ENCODE measurements at regions of chr19 and their contacts with region 1.

Region 1: GRCh38 chr19:12551060-12551832 is at the start of gene ZNF564:
- DNase-seq: peak; percentile 74 to 97 (median 95)
- ATAC-seq: peak; percentile 99
- H3K4me3 ChIP-seq: peak within 1 kb of the TSS; percentile 88
- H3K4me3 Mint-ChIP-seq: peak within 1 kb of the TSS; percentile 89 to 100 (median 98)
- H3K27ac ChIP-seq: peak within 1 kb of the TSS; percentile 90
- H3K27ac Mint-ChIP-seq: peak within 1 kb of the TSS; percentile 92 to 98 (median 95)
- H3K4me1 ChIP-seq: peaks cover 8 to 28% of the 10 kb centered on the region in 2 donors
- H3K4me1 Mint-ChIP-seq: peaks cover 29 to 55% (median 47%) of the 10 kb centered on the region in 7 donors
- H3K27me3 ChIP-seq: no peaks in the 10 kb centered on the region
- H3K27me3 Mint-ChIP-seq: peaks cover 0 to 4% (median 0%) of the 10 kb centered on the region in 5 donors
- total RNA-seq, gene ZNF564: 10.5 to 33.6 (median 19.0) TPM

Region 2: GRCh38 chr19:12162882-12163806 is 388.1 kb before region 1 on chr19 and contains the start of gene ZNF136:
- CTCF ChIA-PET with region 1: no interaction called
- POLR2A ChIA-PET with region 1: interaction called, 3 read pairs
- intact Hi-C with region 1: loop called (anchors 1 kb)
- DNase-seq: peak; percentile 77 to 95 (median 91)
- ATAC-seq: peak; percentile 99
- H3K4me3 ChIP-seq: peak within 1 kb of the TSS; percentile 78
- H3K4me3 Mint-ChIP-seq: peak within 1 kb of the TSS; percentile 88 to 100 (median 98)
- H3K27ac ChIP-seq: peak within 1 kb of the TSS; percentile 96
- H3K27ac Mint-ChIP-seq: peak within 1 kb of the TSS; percentile 88 to 100 (median 98)
- H3K4me1 ChIP-seq: peaks cover 7 to 15% of the 10 kb centered on the region in 2 donors
- H3K4me1 Mint-ChIP-seq: peaks cover 28 to 64% (median 46%) of the 10 kb centered on the region in 7 donors
- H3K27me3 ChIP-seq: no peaks in the 10 kb centered on the region
- H3K27me3 Mint-ChIP-seq: no peaks in the 10 kb centered on the region
- total RNA-seq, gene ZNF136: 16.8 to 36.8 (median 31.1) TPM

Region 3: DNA sequence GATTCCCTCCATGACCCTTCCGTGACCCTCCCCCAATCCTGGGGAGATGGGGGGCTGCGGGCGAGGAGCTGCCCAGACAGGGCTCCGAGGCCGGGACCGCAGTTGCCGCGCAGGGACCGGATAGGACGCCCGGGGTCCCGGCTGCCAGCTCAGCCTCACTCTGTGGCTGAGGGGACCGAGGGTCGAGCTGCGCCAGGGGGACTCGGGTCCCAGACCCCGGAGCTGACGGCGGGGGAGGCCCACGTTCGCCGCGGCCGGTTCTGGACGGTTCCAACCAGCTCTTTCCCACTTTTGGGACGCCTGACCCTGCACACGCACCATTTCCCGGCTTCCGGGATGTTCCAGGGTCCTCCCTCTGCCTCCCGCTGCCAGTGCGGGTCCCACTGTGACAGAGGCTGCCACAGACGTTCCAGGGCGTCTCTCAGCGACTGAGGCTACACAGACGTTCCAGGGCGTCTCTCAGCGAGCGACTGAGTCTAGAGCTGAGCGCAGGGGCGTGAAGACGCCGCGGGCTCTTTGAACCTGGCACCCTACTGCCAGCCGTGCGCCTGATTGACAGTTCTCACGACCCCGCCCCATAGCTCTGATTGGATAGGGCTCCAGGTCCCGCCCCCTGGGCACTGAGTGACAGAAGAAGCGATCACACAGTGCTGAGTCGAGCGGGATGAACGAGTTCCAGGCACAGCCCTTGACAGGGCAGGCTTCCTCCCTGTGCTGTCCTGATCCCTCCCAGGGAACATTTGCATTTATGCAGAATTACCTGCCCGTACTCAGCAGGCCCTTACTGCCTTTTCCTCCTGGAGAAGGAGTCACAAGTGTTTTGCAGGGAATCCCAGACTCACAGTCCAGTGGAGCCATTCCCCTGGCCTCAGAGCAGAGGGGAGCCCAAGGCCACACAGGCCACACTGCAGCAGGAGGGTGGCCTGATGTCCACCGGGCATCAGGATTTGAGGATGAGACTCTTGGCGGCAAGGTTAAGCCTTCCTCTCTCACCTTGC is 217.8 kb before region 1 on chr19 and contains the start of gene ZNF563:
- CTCF ChIA-PET with region 1: no interaction called
- POLR2A ChIA-PET with region 1: interaction called, 9 read pairs
- intact Hi-C with region 1: loop called in 1 of 2 experiments (anchors 1 kb)
- DNase-seq: peak; percentile 91 to 99 (median 98)
- ATAC-seq: peak; percentile 99
- H3K4me3 ChIP-seq: peak within 1 kb of the TSS; percentile 61
- H3K4me3 Mint-ChIP-seq: peak within 1 kb of the TSS; percentile 90 to 100 (median 96)
- H3K27ac ChIP-seq: peak within 1 kb of the TSS; percentile 92
- H3K27ac Mint-ChIP-seq: peak within 1 kb of the TSS; percentile 92 to 99 (median 97)
- H3K4me1 ChIP-seq: peaks cover 9 to 22% of the 10 kb centered on the region in 2 donors
- H3K4me1 Mint-ChIP-seq: peaks cover 23 to 49% (median 40%) of the 10 kb centered on the region in 7 donors
- H3K27me3 ChIP-seq: no peaks in the 10 kb centered on the region
- H3K27me3 Mint-ChIP-seq: no peaks in the 10 kb centered on the region
- total RNA-seq, gene ZNF563: 2.8 to 23.2 (median 6.1) TPM

Region 4: GRCh38 chr19:12346896-12347295 is 204.3 kb before region 1 on chr19:
- CTCF ChIA-PET with region 1: no interaction called
- POLR2A ChIA-PET with region 1: no interaction called
- intact Hi-C with region 1: no loop called
- DNase-seq: peak in 5 of 9 donors; percentile 19 to 52 (median 32)
- ATAC-seq: peak; percentile 68
- H3K4me3 ChIP-seq: no peak overlapping the region
- H3K4me3 Mint-ChIP-seq: no peak overlapping the region
- H3K27ac ChIP-seq: no peak overlapping the region
- H3K27ac Mint-ChIP-seq: peak overlapping the region in 1 of 9 donors; percentile 36
- H3K4me1 ChIP-seq: no peaks in the 10 kb centered on the region
- H3K4me1 Mint-ChIP-seq: peaks cover 0 to 2% (median 0%) of the 10 kb centered on the region in 7 donors
- H3K27me3 ChIP-seq: no peaks in the 10 kb centered on the region
- H3K27me3 Mint-ChIP-seq: no peaks in the 10 kb centered on the region

Region 5: GRCh38 chr19:12440541-12441316 is 110.5 kb before region 1 on chr19 and contains the start of gene ZNF443:
- CTCF ChIA-PET with region 1: no interaction called
- POLR2A ChIA-PET with region 1: interaction called, 4 read pairs
- intact Hi-C with region 1: loop called (anchors 1 to 2 kb)
- DNase-seq: peak; percentile 93 to 99 (median 98)
- ATAC-seq: peak; percentile 99
- H3K4me3 ChIP-seq: peak within 1 kb of the TSS; percentile 80
- H3K4me3 Mint-ChIP-seq: peak within 1 kb of the TSS; percentile 97 to 100 (median 100)
- H3K27ac ChIP-seq: peak within 1 kb of the TSS; percentile 72
- H3K27ac Mint-ChIP-seq: peak within 1 kb of the TSS; percentile 84 to 99 (median 96)
- H3K4me1 ChIP-seq: no peaks in the 10 kb centered on the region
- H3K4me1 Mint-ChIP-seq: peaks cover 12 to 34% (median 24%) of the 10 kb centered on the region in 7 donors
- H3K27me3 ChIP-seq: no peaks in the 10 kb centered on the region
- H3K27me3 Mint-ChIP-seq: no peaks in the 10 kb centered on the region
- total RNA-seq, gene ZNF443: 3.0 to 9.1 (median 4.1) TPM

Region 6: DNA sequence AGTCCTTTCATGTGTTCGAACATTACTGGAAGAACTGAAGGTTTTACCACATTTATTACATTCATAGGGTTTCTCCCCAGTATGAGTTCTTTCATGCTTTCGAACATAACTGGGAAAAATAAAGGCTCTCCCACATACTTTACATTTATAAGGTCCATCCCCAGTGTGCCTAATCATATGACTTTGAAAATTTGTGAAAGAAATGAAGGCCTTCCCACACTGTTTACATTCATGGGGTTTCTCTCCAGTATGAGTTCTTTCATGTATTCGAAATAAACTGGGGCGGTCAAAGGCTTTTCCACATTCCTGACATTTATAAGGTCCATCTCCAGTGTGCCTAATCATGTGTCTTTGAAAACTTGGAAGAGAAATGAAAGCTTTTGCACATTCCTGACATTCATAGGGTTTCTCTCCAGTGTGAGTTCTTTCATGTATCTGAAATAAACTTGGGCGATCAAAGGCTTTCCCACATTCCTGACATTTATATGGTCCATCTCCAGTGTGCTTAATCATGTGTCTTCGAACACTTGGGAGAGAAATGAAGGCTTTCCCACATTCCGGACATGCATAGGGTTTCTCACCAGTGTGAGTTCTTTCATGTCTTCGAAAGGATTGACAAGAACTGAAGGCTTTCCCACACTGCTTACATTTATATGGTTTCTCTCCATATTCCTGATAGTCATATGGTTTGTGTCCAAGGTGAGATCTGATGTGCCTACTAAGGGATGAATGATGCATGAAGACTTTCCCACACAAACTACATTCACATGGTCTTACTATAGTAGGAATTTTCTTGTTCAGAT is 24.0 kb before region 1 on chr19:
- CTCF ChIA-PET with region 1: no interaction called
- POLR2A ChIA-PET with region 1: interaction called, 12 read pairs
- intact Hi-C with region 1: no loop called
- DNase-seq: peak in 5 of 9 donors; percentile 11 to 31 (median 15)
- ATAC-seq: no peak
- H3K4me3 ChIP-seq: no peak overlapping the region
- H3K4me3 Mint-ChIP-seq: peak overlapping the region in 3 of 10 donors; percentile 13 to 28 (median 21)
- H3K27ac ChIP-seq: no peak overlapping the region
- H3K27ac Mint-ChIP-seq: peak overlapping the region in 3 of 9 donors; percentile 19 to 69 (median 29)
- H3K4me1 ChIP-seq: no peaks in the 10 kb centered on the region
- H3K4me1 Mint-ChIP-seq: peaks cover 0 to 4% (median 0%) of the 10 kb centered on the region in 7 donors
- H3K27me3 ChIP-seq: no peaks in the 10 kb centered on the region
- H3K27me3 Mint-ChIP-seq: no peaks in the 10 kb centered on the region

Region 7: DNA sequence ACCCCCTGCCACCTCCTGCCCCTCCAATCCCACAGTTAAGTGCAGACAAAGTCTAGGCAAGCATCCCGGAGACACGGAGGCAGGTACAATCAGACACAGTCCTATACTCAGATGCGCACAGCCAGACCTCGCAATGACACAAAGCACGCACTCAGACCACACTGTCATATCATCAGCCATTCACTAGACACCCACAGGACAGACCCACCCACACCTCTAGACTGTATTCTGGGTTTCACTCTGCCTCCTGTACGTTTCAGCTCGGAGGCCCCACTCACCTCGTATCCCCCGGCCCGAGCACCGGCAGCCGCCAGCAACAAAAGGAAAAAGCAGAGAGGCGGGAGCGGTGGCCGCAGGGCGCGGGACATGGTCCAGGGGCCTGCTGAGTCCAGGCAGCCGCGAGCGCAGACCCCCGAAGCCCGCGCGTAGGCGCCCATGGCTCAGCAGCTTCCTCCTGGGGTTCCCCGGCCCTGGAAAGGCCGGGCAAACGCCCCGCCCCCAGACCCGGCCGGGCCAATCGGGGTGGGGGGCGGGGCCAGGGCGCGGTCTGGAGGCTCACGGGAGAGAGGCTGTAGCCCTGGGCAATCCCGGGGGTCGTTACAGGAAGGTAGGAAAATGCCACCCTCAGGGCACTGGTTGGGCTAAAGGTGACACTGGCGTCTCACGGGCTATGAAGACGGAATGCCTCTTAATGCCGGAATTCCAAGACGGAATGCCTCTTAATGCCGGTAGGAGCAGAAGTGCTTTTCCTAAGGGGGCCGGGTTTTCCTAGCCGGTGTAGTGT is 115.2 kb after region 1 on chr19 and contains the starts of genes MAN2B1 and WDR83:
- CTCF ChIA-PET with region 1: interaction called, 3 read pairs
- POLR2A ChIA-PET with region 1: interaction called, 3 read pairs
- intact Hi-C with region 1: loop called (anchors 1 kb)
- DNase-seq: peak; percentile 56 to 86 (median 72)
- ATAC-seq: peak; percentile 82
- H3K4me3 ChIP-seq: peak within 1 kb of the TSS; percentile 92
- H3K4me3 Mint-ChIP-seq: peak within 1 kb of the TSS; percentile 90 to 100 (median 98)
- H3K27ac ChIP-seq: peak within 1 kb of the TSS; percentile 99
- H3K27ac Mint-ChIP-seq: peak within 1 kb of the TSS; percentile 77 to 100 (median 91)
- H3K4me1 ChIP-seq: peaks cover 38% of the 10 kb centered on the region in 2 donors
- H3K4me1 Mint-ChIP-seq: peaks cover 22 to 69% (median 45%) of the 10 kb centered on the region in 7 donors
- H3K27me3 ChIP-seq: no peaks in the 10 kb centered on the region
- H3K27me3 Mint-ChIP-seq: no peaks in the 10 kb centered on the region
- total RNA-seq, gene MAN2B1: 105 to 215 (median 138) TPM
- total RNA-seq, gene WDR83: 7.8 to 18.6 (median 14.7) TPM

Region 8: GRCh38 chr19:12965017-12965811 is 414.0 kb after region 1 on chr19:
- CTCF ChIA-PET with region 1: no interaction called
- POLR2A ChIA-PET with region 1: no interaction called
- intact Hi-C with region 1: no loop called
- DNase-seq: peak; percentile 57 to 91 (median 78)
- ATAC-seq: peak; percentile 98
- H3K4me3 ChIP-seq: peak overlapping the region; percentile 87
- H3K4me3 Mint-ChIP-seq: peak overlapping the region; percentile 78 to 92 (median 88)
- H3K27ac ChIP-seq: peak overlapping the region; percentile 21
- H3K27ac Mint-ChIP-seq: peak overlapping the region in 8 of 9 donors; percentile 10 to 86 (median 54)
- H3K4me1 ChIP-seq: peaks cover 3 to 9% of the 10 kb centered on the region in 2 donors
- H3K4me1 Mint-ChIP-seq: peaks cover 5 to 11% (median 7%) of the 10 kb centered on the region in 7 donors
- H3K27me3 ChIP-seq: no peaks in the 10 kb centered on the region
- H3K27me3 Mint-ChIP-seq: no peaks in the 10 kb centered on the region

Region 9: DNA sequence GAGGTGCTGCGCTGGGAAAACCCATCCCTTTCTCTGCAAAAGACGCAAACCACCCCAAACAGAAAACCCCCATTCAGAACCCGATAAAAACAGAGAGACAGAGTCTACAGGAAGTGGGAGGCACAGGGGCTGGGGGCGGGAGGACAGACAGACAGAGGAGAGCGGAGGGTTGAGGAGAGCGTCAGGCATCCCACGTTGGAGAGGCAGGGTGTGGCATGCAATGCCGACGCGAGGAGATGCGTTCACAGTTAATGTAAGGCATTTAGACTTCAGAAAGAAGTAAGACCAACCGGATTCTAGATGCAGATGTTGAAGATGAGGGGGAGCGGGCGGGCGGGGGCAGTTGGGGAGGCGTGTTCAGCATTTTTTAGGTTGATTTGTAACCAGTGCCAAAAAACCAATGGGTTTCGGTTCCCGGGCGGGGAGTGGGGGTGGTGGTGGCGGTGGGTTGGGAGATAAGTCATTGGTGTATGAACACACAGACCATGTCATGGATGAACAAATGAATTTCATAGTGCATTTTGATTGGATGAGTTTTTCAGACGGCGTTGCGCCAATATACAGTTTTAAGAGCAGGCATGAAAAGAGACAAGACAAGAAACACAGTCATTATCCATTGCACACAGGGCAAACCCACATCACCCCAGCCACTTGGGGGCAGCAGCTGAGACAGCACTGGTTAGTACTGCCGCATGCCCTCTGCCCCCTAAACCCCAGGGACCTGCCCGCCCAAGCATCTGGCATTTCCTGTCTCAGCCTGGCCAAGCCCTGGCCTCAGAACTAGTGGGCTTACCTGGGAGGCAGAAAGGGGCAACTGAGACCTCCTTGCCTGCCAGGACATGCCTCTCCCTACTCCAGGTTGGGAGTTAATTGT is 690.2 kb after region 1 on chr19:
- CTCF ChIA-PET with region 1: no interaction called
- POLR2A ChIA-PET with region 1: no interaction called
- intact Hi-C with region 1: no loop called
- DNase-seq: peak in 2 of 9 donors; percentile 4 to 19
- ATAC-seq: peak; percentile 27
- H3K4me3 ChIP-seq: no peak overlapping the region
- H3K4me3 Mint-ChIP-seq: peak overlapping the region in 5 of 10 donors; percentile 20 to 63 (median 49)
- H3K27ac ChIP-seq: no peak overlapping the region
- H3K27ac Mint-ChIP-seq: peak overlapping the region in 4 of 9 donors; percentile 9 to 40 (median 22)
- H3K4me1 ChIP-seq: no peaks in the 10 kb centered on the region
- H3K4me1 Mint-ChIP-seq: peaks cover 10 to 31% (median 18%) of the 10 kb centered on the region in 7 donors
- H3K27me3 ChIP-seq: no peaks in the 10 kb centered on the region
- H3K27me3 Mint-ChIP-seq: peaks cover 0 to 4% (median 0%) of the 10 kb centered on the region in 5 donors